ENCODE measurements at regions of chr1 and their contacts with region 1.

Region 1: GRCh38 chr1:223700942-223701637 is 11.2 kb upstream of the CAPN2 start:
- H3K4me3 Mint-ChIP-seq: no peak overlapping the region
- H3K27ac Mint-ChIP-seq: peak overlapping the region; percentile 28
- H3K4me1 Mint-ChIP-seq: peaks cover 44% of the 10 kb centered on the region
- H3K27me3 Mint-ChIP-seq: peaks cover 2% of the 10 kb centered on the region

Region 2: DNA sequence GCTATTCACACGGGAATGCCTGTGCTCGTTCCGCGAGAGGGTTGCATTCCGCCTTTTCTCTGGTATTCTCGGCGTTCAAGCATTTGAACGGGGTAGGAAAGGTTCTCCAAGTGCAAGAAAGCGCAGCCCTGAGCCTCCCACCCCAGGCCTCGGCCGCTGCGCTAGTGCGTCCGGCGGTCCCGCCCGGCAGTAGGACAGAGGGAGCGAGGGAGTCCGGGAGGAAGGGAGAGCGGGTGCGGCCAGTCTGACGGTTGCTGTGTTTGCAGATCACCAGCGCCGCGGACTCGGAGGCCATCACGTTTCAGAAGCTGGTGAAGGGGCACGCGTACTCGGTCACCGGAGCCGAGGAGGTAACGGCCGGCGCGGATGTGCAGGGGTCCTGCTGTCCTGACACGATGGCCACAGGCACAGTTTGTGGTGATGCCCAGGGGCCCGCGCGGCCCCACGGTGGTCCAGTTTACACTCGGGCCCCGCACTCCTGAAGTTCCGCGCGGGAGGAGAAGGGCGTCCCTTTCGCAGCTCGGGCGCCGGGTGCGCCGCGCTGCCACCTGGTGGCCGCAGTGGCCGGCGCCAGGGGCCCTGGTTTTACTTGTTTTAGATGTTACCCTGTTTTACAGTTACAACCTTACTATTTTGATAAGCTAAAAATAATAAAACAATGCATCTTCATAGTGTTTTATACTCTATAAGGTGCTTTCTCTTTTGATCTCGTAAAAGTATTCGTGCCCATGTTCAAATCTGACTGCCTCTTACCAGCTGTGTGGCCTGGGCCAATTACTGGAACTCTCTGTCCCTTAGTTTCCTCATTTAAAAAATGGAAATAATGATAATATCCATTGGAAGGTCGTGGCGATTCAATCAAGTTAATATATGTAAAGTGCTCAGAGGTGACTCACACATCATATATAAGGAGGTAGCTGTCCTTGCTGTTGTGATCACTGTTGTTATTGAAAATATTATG is 48.0 kb after region 1 on chr1:
- intact Hi-C with region 1: loop called (anchors 1 kb)
- H3K4me3 Mint-ChIP-seq: peak overlapping the region; percentile 70
- H3K27ac Mint-ChIP-seq: peak overlapping the region; percentile 66
- H3K4me1 Mint-ChIP-seq: peaks cover 22% of the 10 kb centered on the region
- H3K27me3 Mint-ChIP-seq: no peaks in the 10 kb centered on the region